ENCODE measurements at regions of chr6 and their contacts with region 1.

Region 1: DNA sequence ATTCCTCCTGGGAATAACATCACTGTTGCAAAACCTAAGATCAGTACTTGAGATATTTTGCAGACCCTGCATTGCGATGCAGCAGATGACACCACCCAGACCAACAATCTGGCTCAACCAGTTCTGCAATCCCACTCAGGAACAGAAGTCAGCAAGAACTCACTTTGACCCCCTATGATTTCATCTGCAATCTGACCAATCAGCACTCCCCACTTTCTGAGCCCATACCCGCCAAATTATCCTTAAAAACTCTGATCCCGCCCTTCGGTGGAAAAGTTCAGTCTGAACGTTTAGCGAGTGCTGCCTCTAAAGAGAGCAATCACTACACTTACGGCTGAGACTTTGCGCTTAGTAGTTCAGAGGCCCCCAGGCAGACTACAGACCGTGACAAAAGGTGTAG is 17.3 kb upstream of the KIAA1586 start:
- DNase-seq: no peak
- ATAC-seq: no peak
- H3K4me3 ChIP-seq: no peak overlapping the region
- H3K27ac ChIP-seq: no peak overlapping the region
- H3K4me1 ChIP-seq: no peaks in the 10 kb centered on the region
- H3K27me3 ChIP-seq: no peaks in the 10 kb centered on the region
- CTCF ChIP-seq: no peak
- POLR2A ChIP-seq: no peak
- RAD21 ChIP-seq: no peak

Region 2: DNA sequence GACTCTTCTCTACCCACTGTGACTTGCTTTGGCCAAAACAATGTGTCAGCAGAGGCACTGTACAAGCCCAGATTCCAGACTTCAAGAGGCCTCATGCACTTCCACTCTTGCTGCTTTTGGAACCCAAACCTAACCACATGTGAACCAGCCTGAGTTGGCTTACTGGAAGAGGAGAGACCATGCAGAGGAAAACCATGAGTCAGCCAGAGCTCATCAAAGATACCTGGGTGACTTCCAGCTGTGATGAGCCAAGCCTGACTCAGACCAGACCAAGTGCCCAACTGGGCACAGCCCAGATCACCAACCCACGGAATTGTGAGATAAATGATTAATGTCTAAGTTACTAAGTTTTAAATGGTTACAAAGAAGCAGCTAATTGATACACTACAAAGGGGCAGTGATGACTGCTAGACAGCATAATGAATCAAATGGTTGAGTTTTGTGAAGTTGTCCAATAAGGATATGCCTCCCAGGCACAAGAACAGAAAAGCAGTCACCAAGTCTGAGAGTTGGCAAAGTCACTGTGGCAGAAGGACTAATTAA is 90.5 kb before region 1 on chr6:
- CTCF ChIA-PET with region 1: no interaction called
- POLR2A ChIA-PET with region 1: no interaction called
- dilution Hi-C with region 1: no loop called
- in situ Hi-C with region 1: no loop called
- intact Hi-C with region 1: no loop called
- DNase-seq: peak; percentile 99
- ATAC-seq: peak; percentile 95
- H3K4me3 ChIP-seq: no peak overlapping the region
- H3K27ac ChIP-seq: no peak overlapping the region
- H3K4me1 ChIP-seq: peaks cover 3% of the 10 kb centered on the region; the same call in 1 of the 2 replicates
- H3K27me3 ChIP-seq: no peaks in the 10 kb centered on the region
- CTCF ChIP-seq: no peak
- POLR2A ChIP-seq: no peak
- RAD21 ChIP-seq: 0 out of 2 replicates have a peak, but pooled peaks have one; percentile 8

Region 3: GRCh38 chr6:56992036-56992435 is 37.2 kb before region 1 on chr6:
- CTCF ChIA-PET with region 1: no interaction called
- POLR2A ChIA-PET with region 1: no interaction called
- dilution Hi-C with region 1: no loop called
- in situ Hi-C with region 1: no loop called
- intact Hi-C with region 1: loop called (anchors 5 kb)
- DNase-seq: no peak
- ATAC-seq: no peak
- H3K4me3 ChIP-seq: no peak overlapping the region
- H3K27ac ChIP-seq: no peak overlapping the region
- H3K4me1 ChIP-seq: no peaks in the 10 kb centered on the region
- H3K27me3 ChIP-seq: no peaks in the 10 kb centered on the region
- CTCF ChIP-seq: no peak
- POLR2A ChIP-seq: no peak
- RAD21 ChIP-seq: no peak

Region 4: GRCh38 chr6:57147955-57148858 is 119.0 kb after region 1 on chr6:
- CTCF ChIA-PET with region 1: no interaction called
- POLR2A ChIA-PET with region 1: no interaction called
- dilution Hi-C with region 1: no loop called
- in situ Hi-C with region 1: no loop called
- intact Hi-C with region 1: no loop called
- DNase-seq: no peak
- ATAC-seq: no peak
- H3K4me3 ChIP-seq: no peak overlapping the region
- H3K27ac ChIP-seq: no peak overlapping the region
- H3K4me1 ChIP-seq: no peaks in the 10 kb centered on the region
- H3K27me3 ChIP-seq: no peaks in the 10 kb centered on the region
- CTCF ChIP-seq: no peak
- POLR2A ChIP-seq: no peak
- RAD21 ChIP-seq: no peak

Region 5: GRCh38 chr6:57342148-57342669 is 313.0 kb after region 1 on chr6:
- CTCF ChIA-PET with region 1: no interaction called
- POLR2A ChIA-PET with region 1: no interaction called
- dilution Hi-C with region 1: no loop called
- in situ Hi-C with region 1: no loop called
- intact Hi-C with region 1: no loop called
- DNase-seq: no peak
- ATAC-seq: no peak
- H3K4me3 ChIP-seq: no peak overlapping the region
- H3K27ac ChIP-seq: no peak overlapping the region
- H3K4me1 ChIP-seq: no peaks in the 10 kb centered on the region
- H3K27me3 ChIP-seq: no peaks in the 10 kb centered on the region
- CTCF ChIP-seq: no peak
- POLR2A ChIP-seq: no peak
- RAD21 ChIP-seq: no peak